ENCODE measurements at regions of chr1 and their contacts with region 1.

Region 1: DNA sequence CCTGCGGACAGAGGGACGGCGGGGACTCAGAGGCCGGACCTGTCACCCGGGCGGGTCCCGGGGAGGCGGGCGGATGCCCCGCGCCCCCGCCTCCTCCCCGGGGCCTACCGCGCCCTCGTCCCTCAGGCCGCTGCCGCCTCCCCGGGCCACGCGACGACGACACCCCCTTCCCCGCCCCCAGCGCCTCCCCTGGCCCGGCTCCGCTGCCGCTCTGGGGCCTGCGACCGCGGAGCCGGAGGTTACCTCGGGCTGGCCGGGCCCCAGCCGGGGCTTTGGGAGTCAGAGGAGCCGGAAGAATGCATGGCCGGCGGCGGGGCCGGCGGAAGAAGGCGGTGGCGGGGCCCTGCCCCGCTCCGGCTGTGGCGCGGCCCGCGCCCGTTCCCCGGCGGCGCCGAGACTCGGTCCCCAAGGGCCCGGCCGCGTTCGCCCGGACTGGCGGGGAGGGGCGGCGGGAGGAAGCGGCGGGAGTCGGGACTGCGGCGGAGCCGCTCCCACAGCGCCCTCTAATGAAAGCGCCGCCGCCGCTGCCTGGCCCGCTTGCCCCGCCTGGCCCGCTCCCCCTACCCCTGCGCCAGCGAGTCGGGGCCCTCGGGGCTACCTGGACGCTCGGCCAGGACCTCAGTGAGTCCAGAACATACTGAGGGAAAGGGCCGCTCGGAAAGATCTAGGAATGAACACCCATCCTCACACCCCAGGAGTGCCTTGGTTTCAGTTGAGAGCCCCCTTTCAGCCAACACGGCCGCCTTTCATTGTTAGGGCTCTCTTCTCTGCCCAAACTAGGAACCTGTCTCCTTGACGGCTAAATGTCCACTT is at the start of gene LPGAT1:
- DNase-seq: peak; percentile 76 to 77
- ATAC-seq: peak; percentile 89 to 95
- H3K4me3 ChIP-seq: peak within 1 kb of the TSS; percentile 69
- H3K27ac ChIP-seq: peak within 1 kb of the TSS; percentile 97 to 99
- H3K4me1 ChIP-seq: peaks cover 42% of the 10 kb centered on the region
- CTCF ChIP-seq: peak; percentile 83
- EP300 ChIP-seq: no peak
- POLR2A ChIP-seq: no peak; the same call in 1 of the 2 replicates
- RAD21 ChIP-seq: peak; percentile 46 to 88; a peak in 4 of 5 replicates
- polyA plus RNA-seq, gene LPGAT1: 48.0 and 48.5 TPM in 2 replicates

Region 2: DNA sequence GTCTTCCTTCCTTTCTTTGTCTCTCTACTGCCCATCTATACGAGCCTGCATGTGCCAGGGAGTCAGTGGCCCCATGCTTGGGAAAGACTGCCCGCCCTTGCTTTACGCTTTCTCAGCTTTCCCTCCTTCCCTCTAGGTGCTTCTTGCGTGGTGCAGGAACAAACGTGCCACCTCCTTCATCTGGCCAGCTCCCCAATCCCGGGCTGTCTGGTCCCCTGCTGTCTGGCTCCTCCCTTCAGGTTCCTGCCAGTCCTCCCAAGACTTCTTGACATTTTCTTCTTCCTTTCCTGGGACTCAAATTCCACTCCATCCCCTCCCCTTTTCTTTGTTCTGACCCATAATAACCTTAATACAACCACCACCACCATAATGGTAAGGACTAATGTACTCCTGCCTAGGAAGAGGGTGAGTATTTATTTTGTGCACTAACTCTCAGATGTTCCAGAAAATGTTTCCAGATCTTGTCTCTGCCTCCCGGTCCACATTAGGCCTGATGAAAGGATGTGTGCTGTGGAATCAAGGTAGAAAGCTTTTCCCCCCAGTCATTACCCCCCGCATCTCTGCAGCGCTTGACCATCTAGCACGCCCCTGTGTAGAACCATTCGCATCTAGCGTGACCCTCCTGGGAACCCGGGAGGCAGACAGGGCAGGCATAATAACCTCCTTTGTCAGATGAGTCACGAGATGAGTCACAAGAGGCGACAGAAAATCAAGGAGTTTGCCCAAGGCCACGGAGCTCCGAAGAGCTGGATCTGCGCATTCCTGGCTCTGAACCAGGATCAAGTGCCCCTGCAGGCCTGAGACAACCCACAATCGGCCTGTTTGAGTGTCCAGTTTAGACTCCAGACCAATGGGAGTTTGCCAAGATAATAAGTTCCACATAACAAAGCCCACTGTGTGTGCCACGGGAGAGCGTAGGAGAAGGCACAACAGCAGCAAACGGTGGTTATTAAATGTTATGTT is 95.0 kb before region 1 on chr1:
- CTCF ChIA-PET with region 1: interaction called, 10 read pairs
- POLR2A ChIA-PET with region 1: no interaction called
- DNase-seq: peak; percentile 95
- ATAC-seq: peak; percentile 89
- H3K4me3 ChIP-seq: peak overlapping the region; percentile 23; the same call in 1 of the 3 replicates
- H3K27ac ChIP-seq: peak overlapping the region; percentile 90 to 92
- H3K4me1 ChIP-seq: peaks cover 58% of the 10 kb centered on the region
- CTCF ChIP-seq: no peak
- EP300 ChIP-seq: peak; percentile 35 to 66; a peak in 3 of 5 replicates
- POLR2A ChIP-seq: no peak
- RAD21 ChIP-seq: peak; percentile 12 to 41; a peak in 3 of 5 replicates

Region 3: GRCh38 chr1:211800925-211801607 is 29.5 kb before region 1 on chr1:
- CTCF ChIA-PET with region 1: no interaction called
- POLR2A ChIA-PET with region 1: no interaction called
- DNase-seq: no peak
- ATAC-seq: no peak
- H3K4me3 ChIP-seq: no peak overlapping the region
- H3K27ac ChIP-seq: no peak overlapping the region
- H3K4me1 ChIP-seq: peaks cover 6% of the 10 kb centered on the region; the same call in 1 of the 3 replicates
- CTCF ChIP-seq: no peak
- EP300 ChIP-seq: no peak
- POLR2A ChIP-seq: no peak
- RAD21 ChIP-seq: no peak

Region 4: DNA sequence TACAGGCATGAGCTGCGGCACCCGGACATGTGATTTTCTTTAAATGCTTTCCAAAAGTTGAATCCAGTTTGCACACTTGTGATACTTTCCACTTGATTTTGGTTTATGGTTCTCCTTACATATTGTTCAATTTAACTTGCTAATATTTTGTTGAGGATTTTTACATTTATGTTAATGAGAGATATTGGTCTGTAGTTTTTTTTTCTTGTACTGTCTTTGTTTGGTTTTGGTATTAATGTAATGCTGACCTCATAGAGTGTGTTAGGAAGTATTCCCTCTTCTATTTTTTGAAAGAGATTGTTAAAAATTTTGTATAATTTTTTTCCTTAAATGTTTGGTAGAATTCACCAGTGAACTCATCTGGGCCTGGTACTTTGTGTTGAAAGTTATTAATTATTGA is 34.6 kb after region 1 on chr1:
- CTCF ChIA-PET with region 1: no interaction called
- POLR2A ChIA-PET with region 1: no interaction called
- DNase-seq: no peak
- ATAC-seq: no peak
- H3K4me3 ChIP-seq: no peak overlapping the region
- H3K27ac ChIP-seq: no peak overlapping the region
- H3K4me1 ChIP-seq: no peaks in the 10 kb centered on the region
- CTCF ChIP-seq: no peak
- EP300 ChIP-seq: no peak
- POLR2A ChIP-seq: no peak
- RAD21 ChIP-seq: no peak

Region 5: DNA sequence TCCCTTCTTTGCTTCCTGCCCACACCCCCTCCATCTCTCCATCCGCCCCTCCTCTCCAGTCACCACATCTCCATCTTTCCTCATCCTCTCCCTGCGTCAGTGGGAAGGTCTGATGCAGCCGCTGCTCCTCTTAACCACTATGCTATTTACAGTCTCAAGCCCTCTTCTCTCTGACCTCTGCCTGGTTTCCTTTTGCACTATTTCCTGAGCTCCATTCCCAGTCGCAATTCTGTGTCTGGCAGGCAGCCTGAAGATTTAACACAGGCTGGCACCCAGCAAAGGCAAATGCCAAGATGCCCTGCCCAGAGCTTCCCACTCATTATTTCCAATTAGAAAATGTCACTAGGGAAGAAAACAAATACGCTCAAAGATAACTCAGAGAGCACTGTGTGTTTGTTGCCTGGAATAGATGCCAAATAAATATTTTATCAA is 89.6 kb after region 1 on chr1:
- CTCF ChIA-PET with region 1: no interaction called
- POLR2A ChIA-PET with region 1: interaction called, 10 read pairs
- DNase-seq: peak; percentile 55 to 96
- ATAC-seq: peak; percentile 70 to 86
- H3K4me3 ChIP-seq: no peak overlapping the region
- H3K27ac ChIP-seq: peak overlapping the region; percentile 95
- H3K4me1 ChIP-seq: peaks cover 63% of the 10 kb centered on the region
- CTCF ChIP-seq: no peak
- EP300 ChIP-seq: peak; percentile 60 to 88; a peak in 3 of 5 replicates
- POLR2A ChIP-seq: no peak
- RAD21 ChIP-seq: peak in 1 of 2 experiments; percentile 13; a peak in 2 of 5 replicates

Region 6: GRCh38 chr1:211944733-211945500 is 114.4 kb after region 1 on chr1:
- CTCF ChIA-PET with region 1: interaction called, 15 read pairs
- POLR2A ChIA-PET with region 1: interaction called, 8 read pairs
- DNase-seq: peak; percentile 93 to 96
- ATAC-seq: peak; percentile 99 to 100
- H3K4me3 ChIP-seq: 0 out of 3 replicates have a peak overlapping the region, but pooled peaks have one; percentile 2
- H3K27ac ChIP-seq: peak overlapping the region; percentile 79 to 84
- H3K4me1 ChIP-seq: peaks cover 30% of the 10 kb centered on the region
- CTCF ChIP-seq: peak; percentile 95
- EP300 ChIP-seq: peak; percentile 10 to 52; a peak in 2 of 5 replicates
- POLR2A ChIP-seq: no peak
- RAD21 ChIP-seq: peak; percentile 95 to 97

Measured in A549 (cell line).